Dendritic cell treated with granulocyte-macrophage colony-stimulating factor and Interleukin-4, amounts not matched to agents 40 ng/mL and 50 ng/mL, for 4 days (primary cell): ENCODE measurements at regions of chr19 and their contacts with region 1.

Region 1: GRCh38 chr19:3429581-3430080 is 50.7 kb downstream of the SMIM24 start:
- H3K4me3 Mint-ChIP-seq: peak overlapping the region; percentile 46
- H3K27ac Mint-ChIP-seq: peak overlapping the region; percentile 66
- H3K4me1 Mint-ChIP-seq: peaks cover 60% of the 10 kb centered on the region
- H3K27me3 Mint-ChIP-seq: no peaks in the 10 kb centered on the region

Region 2: GRCh38 chr19:3075895-3076431 is 353.7 kb before region 1 on chr19:
- intact Hi-C with region 1: no loop called
- H3K4me3 Mint-ChIP-seq: no peak overlapping the region
- H3K27ac Mint-ChIP-seq: no peak overlapping the region
- H3K4me1 Mint-ChIP-seq: peaks cover 18% of the 10 kb centered on the region
- H3K27me3 Mint-ChIP-seq: peaks cover 32% of the 10 kb centered on the region

Region 3: GRCh38 chr19:3343619-3344502 is 85.8 kb before region 1 on chr19:
- intact Hi-C with region 1: loop called (anchors 5 kb)
- H3K4me3 Mint-ChIP-seq: peak overlapping the region; percentile 58
- H3K27ac Mint-ChIP-seq: peak overlapping the region; percentile 30
- H3K4me1 Mint-ChIP-seq: peaks cover 7% of the 10 kb centered on the region
- H3K27me3 Mint-ChIP-seq: peaks cover 12% of the 10 kb centered on the region

Region 4: GRCh38 chr19:3387645-3388589 is 41.7 kb before region 1 on chr19:
- intact Hi-C with region 1: no loop called
- H3K4me3 Mint-ChIP-seq: no peak overlapping the region
- H3K27ac Mint-ChIP-seq: peak overlapping the region; percentile 78
- H3K4me1 Mint-ChIP-seq: peaks cover 64% of the 10 kb centered on the region
- H3K27me3 Mint-ChIP-seq: no peaks in the 10 kb centered on the region

Region 5: GRCh38 chr19:3469638-3470499 is 40.2 kb after region 1 on chr19:
- intact Hi-C with region 1: no loop called
- H3K4me3 Mint-ChIP-seq: no peak overlapping the region
- H3K27ac Mint-ChIP-seq: no peak overlapping the region
- H3K4me1 Mint-ChIP-seq: peaks cover 5% of the 10 kb centered on the region
- H3K27me3 Mint-ChIP-seq: peaks cover 6% of the 10 kb centered on the region